MCF 10A (cell line): ENCODE measurements at regions of chr11 and their contacts with region 1.

Region 1: GRCh38 chr11:57800444-57801182 is 39.0 kb downstream of the CTNND1 start:
- DNase-seq: peak; percentile 76
- H3K4me3 Mint-ChIP-seq: no peak overlapping the region
- H3K27ac Mint-ChIP-seq: no peak overlapping the region
- H3K4me1 Mint-ChIP-seq: peaks cover 20% of the 10 kb centered on the region
- H3K27me3 Mint-ChIP-seq: no peaks in the 10 kb centered on the region
- CTCF ChIP-seq: peak; percentile 71

Region 2: DNA sequence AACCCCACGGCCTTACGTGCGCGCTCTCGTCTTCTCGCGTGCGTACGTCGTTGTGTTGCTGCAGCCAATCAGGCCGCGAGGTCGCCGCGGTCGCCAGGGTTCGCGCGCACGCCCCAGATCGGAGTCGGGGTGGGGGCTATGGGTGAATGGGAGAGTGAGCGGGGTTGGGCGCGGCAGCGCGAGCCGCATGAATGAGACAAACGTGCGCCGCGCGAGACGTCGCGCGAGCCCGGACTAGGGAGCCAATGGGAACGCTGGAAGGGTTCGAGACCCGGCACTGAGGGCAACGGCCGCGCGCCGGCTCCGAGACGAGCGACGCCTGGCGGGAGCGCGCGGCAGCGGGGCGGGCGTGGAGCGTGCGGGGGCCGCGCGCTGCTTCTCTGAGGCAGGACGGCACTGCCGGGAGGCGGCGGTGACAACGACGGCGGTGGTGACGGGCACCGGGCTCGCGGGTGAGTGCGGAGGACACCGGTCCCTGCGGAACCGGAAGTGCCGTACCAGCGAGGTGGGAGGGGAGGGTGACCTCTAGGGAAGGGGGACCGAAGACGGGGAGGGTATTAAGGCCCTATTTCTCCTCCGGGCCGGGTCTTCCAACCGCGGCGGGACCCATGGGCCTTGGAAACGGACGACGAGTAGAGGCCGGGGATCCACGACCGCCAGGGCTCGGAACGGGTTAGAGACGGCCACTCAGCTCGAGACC is 132.7 kb before region 1 on chr11 and contains the start of gene ZDHHC5:
- CTCF ChIA-PET with region 1: interaction called, 5 read pairs
- POLR2A ChIA-PET with region 1: interaction called, 12 read pairs
- intact Hi-C with region 1: loop called (anchors 5 kb)
- DNase-seq: peak; percentile 99
- H3K4me3 Mint-ChIP-seq: peak within 1 kb of the TSS; percentile 96
- H3K27ac Mint-ChIP-seq: peak within 1 kb of the TSS; percentile 100
- H3K4me1 Mint-ChIP-seq: peaks cover 18% of the 10 kb centered on the region
- H3K27me3 Mint-ChIP-seq: no peaks in the 10 kb centered on the region
- CTCF ChIP-seq: peak; percentile 44
- total RNA-seq, gene ZDHHC5: 73.8 and 74.6 TPM in 2 replicates

Region 3: DNA sequence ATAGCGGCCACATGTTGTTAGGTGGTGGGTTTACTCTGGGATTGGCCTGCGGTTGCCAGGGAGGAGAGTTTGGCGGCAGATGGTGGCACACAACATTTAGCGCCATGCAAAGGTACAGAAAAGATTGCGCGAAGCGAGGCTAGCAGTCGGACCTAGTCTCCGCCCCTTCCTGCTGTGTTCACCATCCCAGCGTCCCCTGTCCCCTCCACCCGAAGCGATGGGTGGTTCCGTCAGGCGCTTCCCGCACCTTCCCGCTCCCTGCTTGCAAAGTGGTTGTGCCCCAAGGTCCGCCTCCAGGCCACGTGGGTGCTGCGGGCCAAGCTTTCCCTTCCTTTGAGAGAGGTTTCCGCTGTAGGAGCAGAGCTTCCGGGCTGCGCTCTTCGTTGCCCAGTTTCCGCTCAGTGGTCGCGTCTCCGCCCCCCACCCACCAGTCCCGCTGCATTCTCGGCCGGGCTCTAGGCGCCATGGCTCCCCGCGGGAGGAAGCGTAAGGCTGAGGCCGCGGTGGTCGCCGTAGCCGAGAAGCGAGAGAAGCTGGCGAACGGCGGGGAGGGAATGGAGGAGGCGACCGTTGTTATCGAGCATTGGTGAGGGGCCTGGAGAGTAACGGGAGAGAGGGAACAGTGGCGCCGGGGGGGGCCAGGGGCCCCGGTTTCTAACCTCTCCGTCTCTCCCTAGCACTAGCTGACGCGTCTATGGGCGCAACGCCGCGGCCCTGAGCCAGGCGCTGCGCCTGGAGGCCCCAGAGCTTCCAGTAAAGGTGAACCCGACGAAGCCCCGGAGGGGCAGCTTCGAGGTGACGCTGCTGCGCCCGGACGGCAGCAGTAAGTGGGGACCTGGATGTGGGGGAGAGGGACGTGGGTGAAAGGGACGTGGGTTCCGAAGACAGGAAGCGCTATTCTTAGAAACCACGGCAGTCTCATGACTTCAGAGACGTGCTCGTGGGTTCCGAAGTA is 59.2 kb before region 1 on chr11 and contains the start of gene SELENOH:
- CTCF ChIA-PET with region 1: interaction called, 115 read pairs
- POLR2A ChIA-PET with region 1: interaction called, 44 read pairs
- intact Hi-C with region 1: no loop called
- DNase-seq: peak; percentile 90
- H3K4me3 Mint-ChIP-seq: peak within 1 kb of the TSS; percentile 89
- H3K27ac Mint-ChIP-seq: peak within 1 kb of the TSS; percentile 99
- H3K4me1 Mint-ChIP-seq: no peaks in the 10 kb centered on the region
- H3K27me3 Mint-ChIP-seq: no peaks in the 10 kb centered on the region
- CTCF ChIP-seq: no peak
- total RNA-seq, gene SELENOH: 60.3 and 84.5 TPM in 2 replicates

Region 4: DNA sequence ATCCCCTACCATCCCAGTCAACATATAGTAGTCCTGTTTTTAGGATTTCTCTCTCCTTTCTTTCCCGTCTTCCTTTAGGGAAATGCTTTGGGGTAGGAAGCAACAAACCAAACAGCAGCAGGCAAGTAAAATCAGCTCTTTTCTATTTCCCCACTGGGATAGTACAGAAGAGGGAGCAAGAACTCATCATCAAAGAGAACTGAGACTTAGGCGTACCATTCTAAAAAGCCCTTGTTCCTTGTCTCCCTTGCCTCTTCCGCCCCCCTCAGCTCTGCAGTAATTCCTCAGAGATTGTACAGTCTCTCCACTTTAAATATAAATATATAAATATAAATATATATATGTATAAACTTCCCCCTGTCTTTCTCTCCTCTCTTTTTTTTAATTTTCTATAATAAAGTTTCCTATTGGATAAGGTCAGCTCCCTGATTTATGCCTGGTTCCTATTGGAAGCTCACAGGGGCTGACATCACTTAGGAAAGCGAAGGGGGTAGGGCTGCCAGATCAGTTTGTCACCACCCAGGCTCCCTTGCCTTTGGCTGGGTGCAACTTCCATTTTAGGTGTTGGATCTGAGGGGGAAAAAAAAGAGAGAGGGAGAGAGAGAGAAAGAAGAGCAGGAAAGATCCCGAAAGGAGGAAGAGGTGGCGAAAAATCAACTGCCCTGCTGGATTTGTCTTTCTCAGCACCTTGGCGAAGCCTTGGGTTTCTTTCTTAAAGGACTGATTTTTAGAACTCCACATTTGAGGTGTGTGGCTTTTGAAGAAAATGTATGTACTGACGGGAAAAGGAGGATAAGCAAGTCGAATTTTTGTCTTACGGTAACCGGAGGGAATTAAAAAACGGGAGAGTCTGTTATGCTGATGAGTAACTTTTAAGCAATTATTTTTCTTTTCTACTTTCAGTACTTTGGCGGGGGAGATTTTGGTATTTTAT is 39.0 kb before region 1 on chr11 and contains the start of gene CTNND1:
- CTCF ChIA-PET with region 1: interaction called, 312 read pairs
- POLR2A ChIA-PET with region 1: interaction called, 215 read pairs
- intact Hi-C with region 1: loop called (anchors 1 kb)
- DNase-seq: peak; percentile 98
- H3K4me3 Mint-ChIP-seq: peak within 1 kb of the TSS; percentile 83
- H3K27ac Mint-ChIP-seq: peak within 1 kb of the TSS; percentile 96
- H3K4me1 Mint-ChIP-seq: peaks cover 25% of the 10 kb centered on the region
- H3K27me3 Mint-ChIP-seq: no peaks in the 10 kb centered on the region
- CTCF ChIP-seq: no peak
- total RNA-seq, gene CTNND1: 114 and 118 TPM in 2 replicates

Region 5: DNA sequence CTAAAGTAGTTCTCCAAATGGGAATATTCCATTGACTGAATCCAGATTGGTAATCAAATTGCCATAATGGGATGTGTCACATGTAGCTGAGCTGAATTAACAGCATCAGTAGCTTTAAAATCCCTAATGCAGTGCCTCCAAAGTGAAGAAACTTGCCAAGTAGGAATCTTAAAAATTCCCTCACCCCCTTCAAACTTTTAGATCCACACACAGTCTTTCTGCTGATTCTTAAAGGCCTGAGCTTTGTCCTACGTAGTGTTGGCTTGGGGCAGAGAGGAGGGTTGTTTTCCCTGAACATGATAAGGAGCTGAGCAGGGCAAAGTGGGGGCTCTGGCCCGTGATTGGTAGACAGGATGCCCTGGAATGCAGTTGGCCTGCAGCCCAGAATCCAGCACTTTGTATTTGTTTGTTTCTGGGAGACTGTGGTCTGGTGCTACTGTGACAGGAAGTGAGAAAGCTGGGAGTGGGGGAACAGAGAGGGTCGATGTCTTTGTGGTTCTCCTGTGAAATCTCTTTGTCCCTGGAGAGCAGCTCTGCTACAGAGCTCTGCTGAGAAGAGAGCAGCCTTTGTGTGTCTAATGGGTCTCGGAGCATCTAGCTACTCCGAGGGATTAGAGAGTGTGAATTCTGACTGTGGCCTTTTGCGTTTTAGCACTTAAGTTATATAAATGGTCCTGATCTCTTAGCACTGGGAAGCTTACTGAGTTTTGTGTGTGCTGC is 22.1 kb before region 1 on chr11:
- CTCF ChIA-PET with region 1: interaction called, 44 read pairs
- POLR2A ChIA-PET with region 1: interaction called, 60 read pairs
- intact Hi-C with region 1: loop called (anchors 1 kb)
- DNase-seq: peak; percentile 96
- H3K4me3 Mint-ChIP-seq: peak overlapping the region; percentile 49
- H3K27ac Mint-ChIP-seq: peak overlapping the region; percentile 85
- H3K4me1 Mint-ChIP-seq: peaks cover 58% of the 10 kb centered on the region
- H3K27me3 Mint-ChIP-seq: no peaks in the 10 kb centered on the region
- CTCF ChIP-seq: no peak

Region 6: GRCh38 chr11:57815476-57815875 is 14.9 kb after region 1 on chr11:
- CTCF ChIA-PET with region 1: interaction called, 15 read pairs
- POLR2A ChIA-PET with region 1: interaction called, 3 read pairs
- intact Hi-C with region 1: no loop called
- DNase-seq: no peak
- H3K4me3 Mint-ChIP-seq: no peak overlapping the region
- H3K27ac Mint-ChIP-seq: no peak overlapping the region
- H3K4me1 Mint-ChIP-seq: no peaks in the 10 kb centered on the region
- H3K27me3 Mint-ChIP-seq: no peaks in the 10 kb centered on the region
- CTCF ChIP-seq: no peak

Region 7: DNA sequence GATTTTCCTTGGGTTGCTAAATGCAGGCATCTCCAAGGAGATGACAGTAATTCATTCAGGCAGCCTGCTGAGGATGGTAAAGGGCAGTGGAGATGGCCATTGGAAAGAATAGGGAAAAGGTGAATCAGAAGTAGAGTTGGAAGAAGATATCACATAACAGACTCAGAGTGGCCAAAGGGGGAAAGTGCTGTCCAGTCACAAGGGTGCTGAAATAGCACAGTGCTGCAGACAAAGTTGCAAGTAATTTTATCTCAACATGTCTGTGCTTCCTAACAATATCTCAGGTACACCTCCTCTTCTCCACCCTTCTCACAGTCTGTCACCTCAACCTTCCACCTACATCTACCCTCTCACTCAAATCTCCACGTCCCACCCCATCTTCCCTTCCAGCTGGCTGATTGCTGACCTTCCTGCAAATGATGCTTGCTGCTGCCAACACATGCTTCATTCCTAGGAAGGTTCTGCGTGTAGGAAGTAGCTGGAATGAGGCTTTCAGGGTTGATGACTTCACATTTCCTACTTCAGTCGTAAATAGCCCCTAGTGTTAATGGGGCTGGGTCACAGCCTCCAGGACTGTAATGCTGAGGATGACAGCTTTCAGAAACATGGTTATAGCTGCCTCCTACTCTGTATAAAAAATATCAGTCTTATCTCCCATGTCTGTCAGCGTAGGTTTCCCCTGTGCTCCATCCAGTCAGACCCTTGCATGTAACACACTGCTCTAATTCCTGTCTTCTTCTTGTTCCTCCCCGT is 84.9 kb after region 1 on chr11:
- CTCF ChIA-PET with region 1: no interaction called
- POLR2A ChIA-PET with region 1: no interaction called
- intact Hi-C with region 1: no loop called
- DNase-seq: peak; percentile 43
- H3K4me3 Mint-ChIP-seq: no peak overlapping the region
- H3K27ac Mint-ChIP-seq: no peak overlapping the region
- H3K4me1 Mint-ChIP-seq: no peaks in the 10 kb centered on the region
- H3K27me3 Mint-ChIP-seq: no peaks in the 10 kb centered on the region
- CTCF ChIP-seq: no peak

Region 8: GRCh38 chr11:58286249-58286648 is 485.6 kb after region 1 on chr11:
- CTCF ChIA-PET with region 1: interaction called, 12 read pairs
- POLR2A ChIA-PET with region 1: no interaction called
- intact Hi-C with region 1: no loop called
- DNase-seq: peak; percentile 56
- H3K4me3 Mint-ChIP-seq: no peak overlapping the region
- H3K27ac Mint-ChIP-seq: no peak overlapping the region
- H3K4me1 Mint-ChIP-seq: no peaks in the 10 kb centered on the region
- H3K27me3 Mint-ChIP-seq: no peaks in the 10 kb centered on the region
- CTCF ChIP-seq: peak; percentile 69